Activated CD8-positive, alpha-beta T cell treated with anti-CD3 and anti-CD28 coated beads, Interleukin-2, amount 10 ng/mL, durations not matched to agents 7 days and 5 days (primary cell): ENCODE measurements at regions of chr6 and their contacts with region 1.

Region 1: DNA sequence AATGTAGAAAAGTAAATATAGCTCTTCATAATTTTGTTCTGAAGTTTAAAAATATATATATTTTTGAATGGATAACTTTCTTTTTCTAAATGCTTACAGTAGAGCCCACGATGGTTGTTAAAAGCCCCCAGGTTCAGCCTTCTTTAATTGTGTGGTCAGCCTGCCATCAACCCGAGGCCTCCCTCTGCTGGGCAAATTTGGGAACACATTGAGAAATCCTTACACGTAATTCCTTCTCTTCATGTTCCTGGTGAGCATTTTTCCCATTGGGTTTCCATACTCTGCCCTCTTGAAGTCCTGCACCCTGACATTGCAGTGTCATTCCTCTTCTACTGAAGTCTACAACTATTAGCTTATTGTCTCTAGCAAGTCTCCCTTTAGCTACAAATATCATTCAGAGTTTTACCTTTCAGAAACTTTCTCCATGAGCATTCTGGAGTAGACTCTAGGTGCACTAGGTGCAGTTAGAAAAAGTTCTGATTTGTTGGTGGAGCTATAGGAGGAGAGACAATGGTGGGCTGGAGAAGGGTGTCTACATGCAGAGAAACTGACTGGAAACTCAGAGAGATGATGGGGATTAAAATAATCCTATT is 40.6 kb downstream of the TRIM38 start:
- DNase-seq: peak; percentile 61
- ATAC-seq: peak; percentile 44
- H3K4me3 Mint-ChIP-seq: no peak overlapping the region
- H3K27ac Mint-ChIP-seq: no peak overlapping the region
- H3K4me1 Mint-ChIP-seq: peaks cover 8% of the 10 kb centered on the region
- H3K27me3 Mint-ChIP-seq: no peaks in the 10 kb centered on the region

Region 2: DNA sequence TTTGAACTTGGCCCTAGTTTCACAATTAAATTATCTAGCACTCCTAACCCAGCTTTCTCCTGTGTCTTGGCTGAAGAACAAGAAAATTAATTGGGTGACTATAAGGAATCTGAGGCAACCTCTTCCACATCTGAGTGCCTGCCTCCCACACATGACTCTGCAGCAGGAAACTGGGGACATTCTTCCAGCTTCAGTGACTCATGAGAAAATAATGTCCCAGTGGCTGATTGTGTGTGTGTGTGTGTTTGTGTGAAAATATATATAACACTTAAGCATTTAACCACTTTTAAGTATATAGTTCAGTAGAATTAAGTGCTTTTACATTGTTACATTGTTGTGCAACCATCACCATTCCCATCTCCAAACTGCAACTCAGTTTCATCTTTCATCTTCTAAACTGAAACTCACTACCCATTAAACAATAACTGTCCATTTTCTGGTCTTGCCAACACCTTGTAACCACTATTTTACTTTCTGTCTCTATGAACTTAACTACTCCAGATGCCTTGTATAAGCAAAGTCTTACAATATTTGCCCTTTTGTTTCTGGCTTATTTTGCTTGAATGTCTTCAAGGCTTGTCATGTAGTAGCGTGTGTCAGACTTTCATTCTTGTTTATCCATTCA is 31.9 kb before region 1 on chr6:
- CTCF ChIA-PET with region 1: interaction called, 12 read pairs
- POLR2A ChIA-PET with region 1: no interaction called
- DNase-seq: no peak
- ATAC-seq: no peak
- H3K4me3 Mint-ChIP-seq: no peak overlapping the region
- H3K27ac Mint-ChIP-seq: no peak overlapping the region
- H3K4me1 Mint-ChIP-seq: peaks cover 46% of the 10 kb centered on the region
- H3K27me3 Mint-ChIP-seq: no peaks in the 10 kb centered on the region

Region 3: GRCh38 chr6:26020329-26021000 is 17.3 kb after region 1 on chr6:
- CTCF ChIA-PET with region 1: interaction called, 139 read pairs
- POLR2A ChIA-PET with region 1: interaction called, 47 read pairs
- DNase-seq: peak; percentile 88
- ATAC-seq: peak; percentile 51
- H3K4me3 Mint-ChIP-seq: peak overlapping the region; percentile 96
- H3K27ac Mint-ChIP-seq: peak overlapping the region; percentile 100
- H3K4me1 Mint-ChIP-seq: peaks cover 65% of the 10 kb centered on the region
- H3K27me3 Mint-ChIP-seq: no peaks in the 10 kb centered on the region

Region 4: DNA sequence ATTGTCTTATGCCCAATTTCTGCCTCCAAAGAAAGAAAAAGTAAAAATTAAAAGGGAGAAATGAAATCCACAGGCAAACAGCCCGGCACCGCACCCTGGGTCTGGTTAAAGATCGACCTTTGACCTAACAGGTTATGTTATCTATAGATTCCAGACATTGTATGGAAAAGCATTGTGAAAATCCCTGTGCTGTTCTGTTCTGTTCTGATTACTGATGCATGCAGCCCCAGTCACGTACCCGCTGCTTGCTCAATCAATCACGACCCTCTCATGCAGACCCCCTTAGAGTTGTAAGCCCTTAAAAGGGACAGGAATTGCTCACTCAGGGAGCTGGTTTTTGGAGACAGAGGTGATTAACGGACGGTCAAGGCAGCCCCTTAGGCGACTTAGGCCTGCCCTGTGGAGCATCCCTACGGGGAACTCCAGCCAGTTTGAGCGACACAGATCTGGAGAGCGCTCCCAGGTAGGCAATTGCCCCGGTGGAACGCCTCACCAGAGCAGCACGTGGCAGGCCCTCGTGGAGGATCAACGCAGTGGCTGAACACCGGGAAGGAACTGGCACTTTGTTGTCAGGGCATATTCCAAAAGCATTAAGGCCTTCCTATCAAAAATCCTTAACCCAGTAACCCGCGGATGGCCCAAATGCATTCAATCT is 72.0 kb after region 1 on chr6:
- CTCF ChIA-PET with region 1: no interaction called
- POLR2A ChIA-PET with region 1: no interaction called
- DNase-seq: no peak
- ATAC-seq: no peak
- H3K4me3 Mint-ChIP-seq: no peak overlapping the region
- H3K27ac Mint-ChIP-seq: no peak overlapping the region
- H3K4me1 Mint-ChIP-seq: peaks cover 2% of the 10 kb centered on the region
- H3K27me3 Mint-ChIP-seq: peaks cover 15% of the 10 kb centered on the region